ENCODE measurements at regions of chr11 and their contacts with region 1.

Region 1: DNA sequence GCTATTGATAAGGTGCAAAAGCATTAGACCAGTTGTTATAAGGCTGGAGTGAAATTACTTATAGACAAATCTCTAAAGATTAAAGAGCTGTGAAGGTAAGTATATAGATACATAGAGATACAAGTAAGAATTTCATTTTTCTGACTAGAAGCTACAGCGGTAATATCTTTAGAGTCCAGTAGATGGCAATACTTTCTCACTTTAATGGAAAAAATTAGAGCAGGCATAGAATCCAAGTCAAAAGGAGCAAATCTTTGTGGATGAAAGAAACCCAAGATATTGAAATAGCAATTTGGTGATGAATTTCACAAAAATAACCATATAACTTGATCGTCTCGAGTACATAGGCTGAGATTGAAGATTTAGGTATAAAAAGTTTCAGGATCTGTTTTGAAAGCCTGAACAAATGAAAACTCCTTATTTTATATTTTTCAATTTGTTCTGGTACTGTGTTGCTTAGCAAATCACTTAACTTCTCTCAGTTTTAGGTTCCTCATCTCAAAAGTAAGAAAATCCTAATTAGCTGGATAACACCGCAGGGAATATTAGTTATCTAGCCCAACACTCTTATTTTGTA is 81.9 kb downstream of the UVRAG start:
- DNase-seq: no peak

Region 2: DNA sequence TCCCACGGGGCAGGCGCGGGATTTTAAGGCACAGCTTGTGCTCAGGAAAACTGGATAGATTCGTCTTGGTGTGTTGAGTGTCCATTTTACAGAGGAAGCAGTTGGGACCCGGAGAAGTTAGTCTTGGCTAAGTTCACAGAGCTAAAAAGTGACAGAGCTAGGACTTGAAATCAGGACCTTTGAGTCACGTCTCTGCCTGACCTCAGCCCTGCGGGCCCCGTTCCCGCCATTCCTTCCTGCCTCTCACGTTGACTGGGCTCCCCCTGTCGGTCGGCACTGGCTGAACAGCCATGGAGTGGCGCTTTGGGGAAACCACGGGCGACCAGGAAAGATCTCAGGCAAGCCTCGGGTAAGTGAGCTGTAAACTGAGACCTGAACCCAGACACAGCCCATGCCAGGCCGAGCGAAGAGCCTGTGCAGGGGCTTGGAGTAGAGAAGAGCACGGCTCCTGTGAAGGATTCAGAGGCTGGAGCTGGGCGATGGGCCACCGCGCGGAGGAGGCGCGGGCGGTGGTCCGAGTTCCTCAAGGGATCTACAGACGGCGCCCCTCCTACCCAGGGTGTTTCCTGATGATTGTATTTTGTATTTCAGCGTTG is 255.3 kb after region 1 on chr11:
- intact Hi-C with region 1: loop called (anchors 5 to 10 kb)
- DNase-seq: peak; percentile 97

Region 3: GRCh38 chr11:76318744-76319384 is 421.9 kb after region 1 on chr11:
- intact Hi-C with region 1: loop called (anchors 5 to 10 kb)
- DNase-seq: peak; percentile 92

Region 4: GRCh38 chr11:76329084-76329984 is 432.4 kb after region 1 on chr11:
- intact Hi-C with region 1: loop called in 1 of 2 experiments (anchors 10 kb)
- DNase-seq: peak; percentile 62

Measured in posterior vena cava (tissue), 2 donors.